Posterior cingulate gyrus (tissue), 11 donors: ENCODE measurements at regions of chr19 and their contacts with region 1.

Region 1: GRCh38 chr19:34178274-34178610 is 5.9 kb downstream of the LSM14A start:
- DNase-seq: no peak

Region 2: GRCh38 chr19:34220472-34221063 is 42.3 kb after region 1 on chr19:
- intact Hi-C with region 1: loop called (anchors 5 kb)
- DNase-seq: peak in 5 of 10 donors; percentile 45 to 67 (median 55)

Region 3: GRCh38 chr19:34310471-34310981 is 132.3 kb after region 1 on chr19:
- intact Hi-C with region 1: no loop called
- DNase-seq: no peak